OCI-LY7 (cell line): ENCODE measurements at regions of chr7 and their contacts with region 1.

Region 1: DNA sequence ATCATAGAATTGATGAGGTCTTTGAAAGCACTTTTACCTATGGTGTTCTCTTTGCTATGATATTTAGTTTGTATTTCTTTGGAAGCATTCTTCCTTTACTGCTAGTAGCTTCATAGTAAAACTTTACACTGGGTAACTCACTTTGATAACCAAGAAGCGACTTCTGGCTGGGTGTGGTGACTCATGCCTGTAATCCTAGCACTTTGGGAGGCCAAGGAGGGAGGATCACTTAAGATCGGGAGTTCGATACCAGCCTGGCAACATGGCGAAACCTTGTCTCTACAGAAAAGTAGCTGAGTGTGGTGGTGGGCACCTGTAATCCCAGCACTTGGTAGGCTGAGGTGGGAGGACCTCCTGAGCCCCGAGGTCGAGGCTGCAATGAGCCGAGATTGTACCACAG is 36.2 kb downstream of the CCDC126 start:
- DNase-seq: no peak
- H3K4me3 ChIP-seq: no peak overlapping the region
- H3K27ac ChIP-seq: no peak overlapping the region
- H3K4me1 ChIP-seq: no peaks in the 10 kb centered on the region
- CTCF ChIP-seq: no peak

Region 2: GRCh38 chr7:23235813-23236228 is 397.6 kb before region 1 on chr7:
- CTCF ChIA-PET with region 1: interaction called, 11 read pairs
- POLR2A ChIA-PET with region 1: no interaction called
- intact Hi-C with region 1: no loop called
- DNase-seq: no peak
- H3K4me3 ChIP-seq: no peak overlapping the region
- H3K27ac ChIP-seq: no peak overlapping the region
- H3K4me1 ChIP-seq: peaks cover 3% of the 10 kb centered on the region
- CTCF ChIP-seq: no peak

Region 3: DNA sequence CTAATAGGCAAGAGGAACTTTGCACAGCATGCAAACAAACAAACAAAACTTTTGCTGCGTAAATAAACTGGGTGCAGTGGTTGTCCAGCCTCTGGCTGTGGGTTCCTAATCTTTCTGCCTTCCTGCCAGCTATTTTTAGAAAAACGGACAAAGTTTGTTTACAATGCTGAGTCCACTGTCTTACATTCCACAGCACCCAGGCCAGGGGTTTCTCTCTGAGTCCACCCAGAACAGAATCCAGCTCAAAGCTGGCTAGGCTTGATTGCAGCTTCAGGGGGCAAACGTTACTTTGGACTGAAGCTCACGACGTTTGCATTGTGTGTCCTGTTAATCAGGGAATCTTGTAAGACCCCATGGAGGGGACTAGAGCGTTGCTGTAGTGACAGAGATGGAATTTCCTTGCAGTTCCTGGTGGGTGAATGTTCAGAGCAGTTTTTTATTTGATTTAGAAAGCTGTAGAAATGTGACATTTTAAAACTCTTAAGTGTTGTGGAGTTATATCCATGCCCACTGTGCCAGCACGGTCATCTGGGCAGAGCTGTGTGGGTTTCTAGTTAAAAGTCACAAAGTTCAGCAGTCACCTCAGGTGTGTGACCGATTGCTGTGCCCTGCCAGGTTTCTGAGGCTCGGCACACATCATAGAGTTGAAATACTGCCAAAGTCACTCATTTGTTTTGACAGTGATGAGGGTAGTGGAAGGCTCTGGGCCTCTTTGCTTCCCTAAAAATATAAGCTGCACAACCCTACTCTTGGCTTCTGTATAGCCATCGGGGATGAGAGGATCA is 323.5 kb after region 1 on chr7:
- CTCF ChIA-PET with region 1: no interaction called
- POLR2A ChIA-PET with region 1: no interaction called
- intact Hi-C with region 1: no loop called
- DNase-seq: no peak
- H3K4me3 ChIP-seq: no peak overlapping the region
- H3K27ac ChIP-seq: no peak overlapping the region
- H3K4me1 ChIP-seq: no peaks in the 10 kb centered on the region
- CTCF ChIP-seq: no peak